K562 (cell line): ENCODE measurements at regions of chr3 and their contacts with region 1.

Region 1: DNA sequence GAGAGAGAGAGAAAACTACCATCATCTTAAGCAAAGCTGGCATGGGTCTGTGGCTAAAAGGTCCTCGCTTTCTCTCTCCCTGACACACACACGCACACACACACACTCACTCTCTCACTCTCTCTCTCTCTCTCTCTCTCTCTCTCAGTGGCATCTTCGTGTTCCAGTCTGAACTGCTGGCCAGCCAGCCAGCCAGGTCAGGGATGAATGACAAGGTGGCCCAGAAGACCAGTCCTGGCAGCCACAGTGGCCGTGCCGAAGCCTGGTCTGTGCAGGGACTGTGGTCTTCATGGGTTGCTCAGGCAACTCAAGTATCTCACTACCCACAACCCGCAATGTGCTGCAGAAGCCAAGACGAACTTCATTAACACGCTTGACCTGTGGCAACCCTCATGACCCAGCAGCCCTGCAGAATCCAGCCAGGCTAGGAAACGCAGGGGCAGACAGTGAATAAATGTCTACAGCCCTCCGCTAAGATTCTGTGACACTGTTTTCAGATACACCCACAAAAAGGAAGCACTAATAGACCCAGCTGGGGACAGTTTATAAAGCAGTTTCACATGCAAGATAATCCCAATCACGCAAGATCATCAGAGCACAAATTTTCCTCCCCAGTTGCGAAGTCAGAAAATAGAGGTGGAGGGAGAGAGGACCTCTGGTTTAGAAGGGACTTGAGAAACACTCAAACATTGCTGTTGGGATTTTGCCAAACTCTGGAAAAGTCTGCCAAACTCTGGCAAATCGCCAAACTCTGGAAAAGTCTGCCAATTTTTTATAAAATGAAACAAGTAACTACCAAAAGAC is 66.4 kb downstream of the XXYLT1 start:
- DNase-seq: peak in 1 of 4 experiments; percentile 54
- ATAC-seq: peak; percentile 48
- H3K4me3 ChIP-seq: no peak overlapping the region
- H3K27ac ChIP-seq: peak overlapping the region; percentile 49
- H3K4me1 ChIP-seq: peaks cover 34 to 41% of the 10 kb centered on the region in 2 experiments
- H3K27me3 ChIP-seq: no peaks in the 10 kb centered on the region
- CTCF ChIP-seq: no peak
- EP300 ChIP-seq: no peak
- POLR2A ChIP-seq: no peak
- RAD21 ChIP-seq: no peak

Region 2: DNA sequence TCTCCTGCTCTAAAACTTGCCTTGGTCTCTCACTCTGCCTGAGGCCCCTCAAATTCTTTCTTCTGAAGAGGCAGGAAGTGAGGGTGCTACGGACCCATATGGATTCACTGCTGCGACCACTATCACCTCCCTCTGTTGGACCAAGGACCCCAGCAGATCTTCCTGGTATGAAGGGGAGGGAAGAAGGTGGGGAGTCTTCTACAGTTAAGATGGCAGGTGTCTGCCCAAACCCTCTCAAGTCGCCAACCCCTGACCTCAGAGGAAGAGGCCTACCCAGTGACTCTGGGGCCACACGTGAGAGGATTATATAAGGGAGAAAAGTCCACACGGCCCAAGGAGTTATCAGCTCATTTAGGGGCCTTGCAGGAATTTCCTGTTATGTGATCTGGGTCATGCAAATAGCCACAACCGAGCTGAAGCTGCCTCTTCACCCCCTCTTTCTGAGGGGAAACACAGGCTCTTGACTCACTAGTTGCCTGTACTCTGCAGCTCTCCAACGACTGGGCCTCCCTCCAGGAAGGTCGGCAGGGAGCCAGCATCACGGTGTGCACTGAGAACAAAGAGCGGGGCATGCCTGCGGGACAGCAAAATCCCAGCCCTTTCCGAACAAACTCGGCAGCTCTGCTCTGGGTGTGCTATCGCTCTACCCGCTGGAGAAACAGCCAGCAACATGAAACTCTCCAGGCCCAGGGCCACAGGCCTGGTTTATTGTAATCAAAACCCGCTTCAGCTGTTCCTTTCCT is 49.6 kb before region 1 on chr3:
- CTCF ChIA-PET with region 1: no interaction called
- POLR2A ChIA-PET with region 1: interaction called, 5 read pairs
- in situ Hi-C with region 1: no loop called
- intact Hi-C with region 1: loop called (anchors 2 kb)
- DNase-seq: peak in 2 of 4 experiments; percentile 57 to 70
- ATAC-seq: peak; percentile 17
- H3K4me3 ChIP-seq: no peak overlapping the region
- H3K27ac ChIP-seq: peak overlapping the region; percentile 84
- H3K4me1 ChIP-seq: peaks cover 39 to 55% of the 10 kb centered on the region in 2 experiments
- H3K27me3 ChIP-seq: no peaks in the 10 kb centered on the region
- CTCF ChIP-seq: no peak
- EP300 ChIP-seq: peak; percentile 15; the same call in 1 of the 2 replicates
- POLR2A ChIP-seq: no peak
- RAD21 ChIP-seq: no peak; a peak in 1 of 4 replicates

Region 3: GRCh38 chr3:195752546-195753331 is 548.2 kb after region 1 on chr3:
- CTCF ChIA-PET with region 1: no interaction called
- POLR2A ChIA-PET with region 1: no interaction called
- in situ Hi-C with region 1: no loop called
- intact Hi-C with region 1: no loop called
- DNase-seq: peak; percentile 30 to 77 (median 56)
- ATAC-seq: peak; percentile 14; the same call in 2 of the 3 replicates
- H3K4me3 ChIP-seq: no peak overlapping the region
- H3K27ac ChIP-seq: no peak overlapping the region
- H3K4me1 ChIP-seq: peaks cover 0 to 25% of the 10 kb centered on the region in 2 experiments; a peak in 3 of 5 replicates
- H3K27me3 ChIP-seq: peaks cover 8 to 45% of the 10 kb centered on the region in 2 experiments; a peak in 4 of 5 replicates
- CTCF ChIP-seq: no peak
- EP300 ChIP-seq: no peak
- POLR2A ChIP-seq: no peak
- RAD21 ChIP-seq: no peak